Right ventricle myocardium inferior (tissue), 1 donor: ENCODE measurements at regions of chr2 and their contacts with region 1.

Region 1: DNA sequence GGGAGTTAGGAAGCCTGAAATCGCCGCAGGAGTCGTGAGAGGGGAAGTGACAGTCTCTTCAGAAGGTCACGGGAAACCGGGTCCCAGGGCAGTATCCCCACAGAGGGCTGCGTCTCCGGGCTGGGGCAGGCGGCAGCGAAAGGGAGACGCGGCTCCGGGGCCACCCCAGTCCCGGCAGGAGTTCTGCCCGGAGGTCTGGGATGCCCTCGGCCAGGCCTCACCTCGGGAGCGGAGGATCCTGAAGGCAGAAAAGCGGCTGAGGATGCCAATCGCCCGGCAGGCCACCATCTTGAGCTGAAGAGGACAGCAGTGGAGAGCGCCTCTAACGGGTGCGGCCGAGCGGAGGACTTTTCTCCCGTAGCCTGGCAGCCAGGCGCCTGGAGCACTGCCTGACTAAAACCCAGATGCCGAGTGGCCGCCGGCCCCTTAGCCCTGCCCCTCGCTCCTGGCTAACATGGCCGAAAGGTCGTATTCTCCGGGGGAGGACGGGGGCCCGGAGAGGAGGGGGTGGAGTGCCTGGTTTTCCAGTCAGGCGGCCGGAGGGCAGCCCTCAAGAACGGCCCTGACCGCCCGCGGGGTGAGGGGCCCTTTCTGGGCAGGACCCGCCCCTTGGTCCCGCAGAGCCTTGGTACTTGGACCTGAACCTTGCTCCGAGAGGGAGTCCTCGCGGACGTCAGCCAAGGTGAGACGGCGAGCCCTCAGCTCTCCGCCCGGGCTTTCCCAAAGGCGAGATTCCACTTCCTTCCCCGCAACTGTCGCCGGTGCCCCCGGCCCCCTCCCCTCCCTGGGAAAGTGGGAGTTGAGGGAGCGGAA is at the starts of genes HADHA and HADHB:
- DNase-seq: peak; percentile 93
- ATAC-seq: peak; percentile 95
- total RNA-seq, gene HADHA: 764 TPM
- total RNA-seq, gene HADHB: 1,782 TPM

Region 2: DNA sequence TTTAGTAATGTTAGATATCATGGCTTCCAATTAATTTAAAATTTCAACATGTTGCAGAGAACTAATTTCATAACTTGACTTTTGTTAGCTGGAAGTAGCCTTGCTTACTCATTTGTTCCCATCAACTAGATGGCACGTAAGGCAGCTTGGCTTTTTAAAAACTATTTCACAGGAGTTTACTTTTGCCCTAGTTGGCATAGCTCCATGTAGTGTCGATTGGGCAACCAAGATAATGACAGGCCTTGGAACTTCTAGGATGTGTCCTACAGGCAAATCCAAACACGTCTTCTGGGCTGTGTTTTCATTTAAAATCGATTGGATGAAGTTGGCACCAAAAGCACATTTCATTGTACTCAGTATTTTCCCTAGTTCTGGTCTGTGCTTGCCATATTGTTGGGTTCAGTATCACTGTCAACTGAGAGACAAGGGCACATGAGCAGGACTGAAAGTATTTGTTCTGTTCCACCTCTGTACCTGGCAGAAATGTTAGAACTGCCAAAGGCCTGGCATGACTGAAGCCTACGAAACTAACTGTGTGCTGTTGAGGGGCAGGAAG is 29.6 kb after region 1 on chr2:
- intact Hi-C with region 1: loop called (anchors 2 kb)
- DNase-seq: no peak
- ATAC-seq: peak; percentile 89

Region 3: DNA sequence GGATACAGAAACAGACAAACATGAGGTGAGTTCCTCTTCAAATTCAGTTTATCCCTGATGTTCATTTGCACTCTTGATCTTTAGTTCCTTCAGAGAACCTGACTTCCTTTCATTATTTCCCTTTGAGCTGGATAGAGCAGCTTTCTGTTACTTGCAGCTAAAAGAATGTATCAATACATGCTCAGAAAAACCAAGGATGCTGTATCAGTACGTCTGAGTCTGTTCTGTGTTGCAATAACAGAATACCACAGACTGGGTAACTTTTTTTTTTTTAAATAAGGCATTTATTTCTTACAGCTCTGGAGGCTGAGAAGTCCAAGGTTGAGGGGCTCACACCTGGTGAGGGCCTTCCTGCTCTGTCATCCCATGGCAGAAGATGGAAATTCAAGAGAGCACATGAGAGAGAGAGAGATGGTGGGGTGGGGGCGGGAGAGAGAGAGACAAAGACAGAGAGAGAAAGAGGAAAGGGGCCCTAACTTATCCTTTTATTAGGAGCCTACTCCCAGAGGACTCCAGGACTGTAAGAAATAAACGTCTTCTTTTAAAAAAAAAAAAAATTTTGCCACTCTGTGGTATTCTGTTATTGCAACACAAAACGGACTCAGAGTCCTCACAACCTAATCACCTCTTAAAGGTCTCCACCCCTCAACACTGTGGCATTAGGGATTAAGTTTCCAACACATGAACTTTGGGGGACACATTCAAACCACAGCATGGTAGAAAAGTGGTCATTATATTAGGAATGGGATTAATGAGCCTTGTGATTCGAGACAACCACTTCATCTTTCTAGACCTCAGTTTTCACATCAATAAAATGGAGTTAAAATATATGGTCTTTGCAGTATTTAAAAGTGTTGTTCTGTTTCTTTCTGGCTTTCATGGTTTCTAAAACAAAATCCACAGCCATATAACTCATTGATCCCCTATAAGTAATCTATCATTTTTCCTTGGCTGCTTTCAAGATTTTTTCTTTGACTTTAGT is 83.1 kb after region 1 on chr2:
- intact Hi-C with region 1: loop called (anchors 5 kb)
- DNase-seq: no peak
- ATAC-seq: no peak

Region 4: GRCh38 chr2:26345545-26346453 is 101.3 kb after region 1 on chr2 and contains the start of gene SELENOI:
- intact Hi-C with region 1: loop called (anchors 5 kb)
- DNase-seq: peak; percentile 99
- ATAC-seq: peak; percentile 99
- total RNA-seq, gene SELENOI: 14.3 TPM